Lower leg skin (tissue), 4 donors: ENCODE measurements at regions of chr10 and their contacts with region 1.

Region 1: GRCh38 chr10:80870282-80870681 is 332.6 kb downstream of the SH2D4B start:
- DNase-seq: no peak
- H3K4me3 ChIP-seq: no peak overlapping the region
- CTCF ChIP-seq: no peak
- POLR2A ChIP-seq: no peak

Region 2: DNA sequence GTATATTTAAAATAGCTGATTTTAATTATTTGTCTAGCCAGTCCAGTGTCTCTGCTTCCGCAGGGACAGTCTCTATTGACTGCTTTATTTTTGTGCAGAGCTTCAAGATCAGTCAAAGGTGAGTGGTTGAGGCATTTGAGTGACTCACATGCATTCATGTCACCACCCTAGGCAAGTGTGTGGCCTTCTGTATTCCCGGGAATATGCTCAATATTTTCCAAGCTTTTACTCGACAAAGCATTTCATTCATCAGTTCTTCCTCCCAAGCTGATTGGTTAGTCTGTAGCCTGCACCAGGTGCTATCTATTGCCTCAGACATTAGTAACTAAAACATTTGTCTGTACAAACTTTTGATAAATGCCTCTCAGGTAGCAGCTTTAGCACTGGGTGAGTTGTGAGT is 533.2 kb after region 1 on chr10:
- intact Hi-C with region 1: loop called (anchors 5 kb)
- DNase-seq: no peak
- H3K4me3 ChIP-seq: no peak overlapping the region
- CTCF ChIP-seq: no peak
- POLR2A ChIP-seq: no peak